ENCODE measurements at regions of chr14 and their contacts with region 1.

Region 1: GRCh38 chr14:25461780-25462179 is 411.8 kb upstream of the STXBP6 start:
- DNase-seq: no peak
- ATAC-seq: no peak
- H3K4me3 ChIP-seq: no peak overlapping the region
- H3K27ac ChIP-seq: no peak overlapping the region
- H3K4me1 ChIP-seq: no peaks in the 10 kb centered on the region
- H3K27me3 ChIP-seq: no peaks in the 10 kb centered on the region
- CTCF ChIP-seq: no peak
- POLR2A ChIP-seq: no peak
- RAD21 ChIP-seq: no peak

Region 2: DNA sequence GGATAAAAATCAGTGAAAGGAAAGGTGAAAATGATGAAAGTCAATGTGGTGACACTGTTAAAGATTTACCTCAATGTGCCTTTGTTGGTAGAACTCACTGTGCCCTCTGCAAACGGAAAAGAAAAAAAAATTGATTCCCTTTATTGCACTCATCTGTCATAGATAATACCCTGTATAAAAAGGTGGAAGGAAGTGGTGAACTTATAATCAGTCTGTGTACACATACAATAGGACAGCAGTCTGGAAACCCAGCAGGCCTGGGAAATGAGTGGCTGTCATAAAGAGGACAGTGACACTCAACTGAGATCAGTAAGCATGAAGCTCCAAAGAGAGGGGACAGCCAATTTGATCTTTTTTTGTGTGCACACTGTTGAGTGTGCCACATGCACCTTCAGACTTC is 771.3 kb after region 1 on chr14:
- CTCF ChIA-PET with region 1: no interaction called
- POLR2A ChIA-PET with region 1: no interaction called
- dilution Hi-C with region 1: no loop called
- in situ Hi-C with region 1: no loop called
- intact Hi-C with region 1: loop called (anchors 5 kb)
- DNase-seq: no peak
- ATAC-seq: no peak
- H3K4me3 ChIP-seq: no peak overlapping the region
- H3K27ac ChIP-seq: no peak overlapping the region
- H3K4me1 ChIP-seq: no peaks in the 10 kb centered on the region
- H3K27me3 ChIP-seq: no peaks in the 10 kb centered on the region
- CTCF ChIP-seq: no peak
- POLR2A ChIP-seq: no peak
- RAD21 ChIP-seq: no peak